ENCODE measurements at regions of chr11 and their contacts with region 1.

Region 1: GRCh38 chr11:61891331-61892084 is at the start of gene FADS3:
- DNase-seq: peak; percentile 92
- total RNA-seq, gene FADS3: 126 TPM

Region 2: DNA sequence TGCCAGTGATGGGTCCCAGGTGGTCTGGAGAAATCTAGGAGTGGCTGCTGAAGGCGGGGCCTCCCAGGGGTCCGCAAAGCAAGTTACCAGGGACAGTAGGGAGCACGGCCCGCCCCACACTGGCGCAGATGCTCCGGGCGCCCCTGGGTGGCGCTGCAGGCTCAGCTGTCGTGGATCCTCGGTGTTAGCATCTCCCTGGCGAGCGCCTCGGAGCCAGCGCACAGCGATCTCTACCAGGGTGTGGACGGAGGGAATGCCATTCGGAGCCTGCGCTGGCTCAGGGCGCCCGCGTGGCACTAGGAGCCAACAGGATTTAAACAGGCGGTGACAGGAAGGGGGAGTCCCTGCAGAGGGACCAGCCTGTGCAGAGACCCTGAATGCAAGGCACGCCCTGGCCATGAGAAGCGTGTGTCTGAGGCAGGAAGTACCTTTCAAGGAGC is 20.3 kb before region 1 on chr11:
- intact Hi-C with region 1: loop called (anchors 1 kb)
- DNase-seq: peak; percentile 90

Region 3: GRCh38 chr11:61967116-61967923 is 75.8 kb after region 1 on chr11 and contains the start of gene FTH1:
- intact Hi-C with region 1: loop called (anchors 2 kb)
- DNase-seq: peak; percentile 97
- total RNA-seq, gene FTH1: 3,174 TPM

Measured in cardiac septum (tissue), 1 donor.